Panc1 (cell line): ENCODE measurements at regions of chr9 and their contacts with region 1.

Region 1: GRCh38 chr9:99393993-99394392 is 171.9 kb downstream of the SEC61B start:
- DNase-seq: no peak
- ATAC-seq: no peak
- H3K4me3 ChIP-seq: no peak overlapping the region
- H3K27ac ChIP-seq: no peak overlapping the region
- H3K4me1 ChIP-seq: no peaks in the 10 kb centered on the region
- H3K27me3 ChIP-seq: no peaks in the 10 kb centered on the region
- CTCF ChIP-seq: no peak

Region 2: DNA sequence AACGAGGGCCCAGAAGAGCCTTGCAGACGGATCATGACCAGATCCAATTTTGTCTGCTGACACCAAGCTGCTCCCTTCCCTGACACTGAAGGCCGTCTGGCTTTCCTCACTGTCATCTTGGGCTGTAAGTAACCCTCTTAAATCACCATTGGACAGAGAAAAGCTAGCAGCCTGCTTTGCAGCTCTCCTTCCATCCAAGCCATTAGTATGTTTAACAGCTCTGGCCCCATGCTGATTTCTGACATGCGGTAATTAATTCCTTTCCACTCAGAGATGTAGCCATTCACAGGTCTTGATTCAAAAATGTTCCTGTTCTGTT is 17.8 kb after region 1 on chr9:
- CTCF ChIA-PET with region 1: no interaction called
- POLR2A ChIA-PET with region 1: no interaction called
- in situ Hi-C with region 1: no loop called
- intact Hi-C with region 1: loop called (anchors 1 kb)
- DNase-seq: no peak
- ATAC-seq: no peak
- H3K4me3 ChIP-seq: no peak overlapping the region
- H3K27ac ChIP-seq: no peak overlapping the region
- H3K4me1 ChIP-seq: no peaks in the 10 kb centered on the region
- H3K27me3 ChIP-seq: no peaks in the 10 kb centered on the region
- CTCF ChIP-seq: no peak